GM18951 (cell line): ENCODE measurements at regions of chr6 and their contacts with region 1.

Region 1: DNA sequence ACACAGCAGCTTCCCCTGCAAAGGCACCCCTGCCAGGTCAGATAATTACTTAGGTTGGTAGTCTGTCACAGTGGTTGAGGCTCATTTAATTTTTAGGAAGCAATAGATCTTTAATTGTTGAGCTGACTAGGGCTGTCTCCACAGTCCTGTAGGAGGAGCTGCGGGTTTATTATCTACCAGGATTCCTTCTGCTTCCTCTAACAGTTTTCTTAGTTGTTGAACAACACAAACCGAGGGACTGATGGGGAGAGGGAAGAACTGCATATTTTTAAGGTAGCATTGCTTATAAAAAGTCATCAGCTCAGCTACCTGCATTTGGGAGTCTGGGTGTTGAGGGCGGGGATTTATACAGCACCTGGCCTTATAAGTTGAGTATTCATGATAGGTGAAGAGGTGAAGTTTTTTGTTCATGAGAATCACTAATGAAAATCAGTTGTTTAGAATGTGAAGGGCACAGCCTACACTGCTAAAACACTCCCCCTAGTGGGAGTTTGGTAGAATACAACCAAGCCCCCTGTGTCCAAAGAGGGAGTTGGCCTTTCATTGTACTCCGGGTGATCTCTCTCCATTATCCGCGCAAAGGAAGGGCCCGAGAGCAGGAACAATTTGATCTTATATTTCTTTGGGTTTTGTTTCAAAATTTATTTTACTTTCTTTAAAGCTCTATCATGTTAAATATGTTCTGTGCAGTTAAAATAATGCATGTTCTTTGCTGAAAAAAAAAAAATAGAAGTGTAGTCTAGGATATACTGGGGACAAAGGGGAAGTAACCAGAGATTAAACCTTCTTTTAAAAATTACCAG is 69.6 kb downstream of the SSR1 start:
- POLR2A ChIP-seq: no peak

Region 2: GRCh38 chr6:5950361-5950785 is 1293.0 kb before region 1 on chr6:
- in situ Hi-C with region 1: no loop called
- POLR2A ChIP-seq: no peak

Region 3: GRCh38 chr6:6724539-6725467 is 518.6 kb before region 1 on chr6:
- in situ Hi-C with region 1: loop called (anchors 10 kb)
- POLR2A ChIP-seq: no peak

Region 4: GRCh38 chr6:7058250-7058923 is 185.0 kb before region 1 on chr6:
- in situ Hi-C with region 1: no loop called
- POLR2A ChIP-seq: no peak